Activated B cell treated with CpG ODN at 0.5 μM for 24 hours (primary cell): ENCODE measurements at regions of chr5 and their contacts with region 1.

Region 1: DNA sequence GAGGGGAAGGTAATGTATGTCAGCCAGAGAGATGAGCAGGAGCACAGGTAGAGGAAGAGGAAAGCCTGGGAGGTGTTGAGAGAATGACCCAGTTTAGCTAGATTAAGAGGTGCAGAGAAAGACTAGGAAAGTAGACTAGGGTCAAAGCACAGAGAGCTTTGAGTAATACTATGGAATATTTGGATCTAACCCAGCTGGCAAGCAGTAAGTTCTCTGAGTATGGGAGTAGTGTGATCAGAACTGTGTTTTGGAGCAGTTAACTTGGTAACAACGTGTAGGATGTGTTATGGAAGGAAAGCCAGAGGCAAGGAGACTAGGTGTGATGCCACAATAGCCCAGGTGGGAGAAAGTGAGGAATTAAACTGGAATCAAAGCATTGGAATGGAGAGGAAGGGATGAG is 84.9 kb upstream of the PTGER4 start:
- DNase-seq: no peak
- ATAC-seq: no peak
- H3K4me3 Mint-ChIP-seq: no peak overlapping the region
- H3K27ac Mint-ChIP-seq: no peak overlapping the region
- H3K4me1 Mint-ChIP-seq: peaks cover 27% of the 10 kb centered on the region
- H3K27me3 Mint-ChIP-seq: no peaks in the 10 kb centered on the region
- CTCF ChIP-seq: no peak

Region 2: DNA sequence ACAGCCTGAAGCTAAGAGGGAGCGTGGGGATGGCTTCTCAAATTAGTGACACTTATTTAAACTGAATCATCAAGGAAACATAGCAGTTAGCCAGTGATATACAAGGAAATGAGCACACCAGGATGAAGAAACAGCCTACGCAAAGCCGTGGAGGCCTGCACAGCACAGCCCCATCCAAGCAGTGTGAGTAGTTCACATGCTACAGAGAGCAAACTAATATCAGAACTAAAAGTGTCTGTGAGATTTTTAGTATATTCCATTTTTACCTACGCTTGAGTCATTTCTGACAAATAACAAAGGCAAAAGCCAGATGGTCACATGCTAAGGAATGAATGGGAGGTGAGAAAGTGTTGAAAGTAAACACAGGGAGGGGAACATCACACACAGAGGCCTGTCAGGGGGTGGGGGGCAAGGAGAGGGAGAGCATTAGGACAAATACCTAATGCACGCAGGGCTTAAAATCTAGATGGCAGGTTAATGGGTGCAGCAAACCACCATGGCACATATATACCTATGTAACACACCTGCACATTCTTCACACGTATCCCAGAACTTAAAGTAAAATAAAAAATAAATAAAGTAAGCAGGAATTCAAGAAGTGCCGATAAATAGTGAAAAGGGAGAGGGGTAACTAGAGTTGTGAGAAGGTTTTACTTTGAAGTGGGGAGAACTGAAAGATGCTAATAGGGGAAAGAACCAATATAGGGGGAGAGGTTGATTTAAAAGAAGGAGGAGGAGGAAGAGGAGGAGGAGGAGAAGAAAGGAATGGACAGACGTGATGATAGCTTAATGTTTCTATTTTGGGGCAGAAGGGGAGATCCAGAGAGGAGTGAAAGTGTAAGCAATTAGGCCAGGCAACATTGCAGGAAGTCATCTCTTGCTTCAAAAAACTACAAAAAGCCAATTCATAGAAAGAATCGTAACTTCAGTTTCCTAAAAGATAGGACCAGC is 16.0 kb before region 1 on chr5:
- CTCF ChIA-PET with region 1: no interaction called
- POLR2A ChIA-PET with region 1: no interaction called
- intact Hi-C with region 1: loop called (anchors 1 kb)
- DNase-seq: no peak
- ATAC-seq: peak; percentile 89
- H3K4me3 Mint-ChIP-seq: peak overlapping the region; percentile 63
- H3K27ac Mint-ChIP-seq: peak overlapping the region; percentile 73
- H3K4me1 Mint-ChIP-seq: peaks cover 19% of the 10 kb centered on the region
- H3K27me3 Mint-ChIP-seq: no peaks in the 10 kb centered on the region
- CTCF ChIP-seq: no peak